CD4-positive, alpha-beta memory T cell (primary cell): ENCODE measurements at regions of chr1 and their contacts with region 1.

Region 1: DNA sequence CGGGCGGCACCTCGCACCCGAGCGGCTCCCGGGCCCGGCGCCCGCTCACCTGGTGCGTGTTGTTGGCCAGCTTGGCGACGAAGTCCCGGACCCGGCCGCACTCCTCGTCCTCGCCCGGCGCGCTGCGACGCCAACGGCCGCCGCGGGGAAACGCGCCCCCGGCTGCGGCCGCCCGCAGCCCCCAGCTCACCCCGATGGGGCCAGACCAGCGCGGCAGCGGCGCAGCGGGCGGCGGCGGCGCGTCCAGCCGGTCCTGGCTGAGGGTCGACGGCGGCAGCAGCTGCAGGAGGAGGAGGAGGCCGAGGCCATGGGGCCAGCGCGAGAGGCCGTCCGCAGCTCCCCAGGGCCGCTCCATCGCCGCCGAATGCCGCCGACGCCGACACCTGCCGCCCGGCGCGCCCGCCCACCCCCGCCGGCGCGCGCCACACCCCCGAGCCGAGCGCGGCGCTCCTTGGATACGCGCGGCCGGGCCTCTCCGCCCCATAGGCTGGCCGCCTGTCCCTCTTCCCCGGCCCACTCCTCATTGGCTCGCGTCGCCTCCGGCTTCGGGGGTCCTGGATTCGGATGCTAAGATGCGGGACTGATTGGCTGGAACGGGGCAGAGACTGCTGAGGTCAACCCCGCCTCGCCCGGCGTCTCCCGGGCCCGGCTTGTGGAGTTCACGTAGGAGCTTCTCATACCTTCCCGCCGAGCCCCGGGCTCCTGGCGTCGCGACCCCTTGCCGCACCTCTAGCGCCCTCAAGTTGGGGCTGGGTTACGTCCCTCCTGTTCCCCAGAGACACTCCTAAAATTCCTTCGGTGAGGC is at the start of gene SORT1:
- DNase-seq: peak; percentile 35 to 50 (median 40)
- H3K4me3 ChIP-seq: no peak within 1 kb of the TSS
- H3K4me3 Mint-ChIP-seq: peak within 1 kb of the TSS; percentile 70 to 86 (median 84)
- H3K27ac ChIP-seq: no peak within 1 kb of the TSS
- H3K27ac Mint-ChIP-seq: peak within 1 kb of the TSS in 2 of 7 donors; percentile 29 to 53
- H3K4me1 ChIP-seq: peaks cover 14% of the 10 kb centered on the region
- H3K4me1 Mint-ChIP-seq: peaks cover 5 to 15% (median 9%) of the 10 kb centered on the region in 4 donors
- H3K27me3 ChIP-seq: peaks cover 37% of the 10 kb centered on the region
- H3K27me3 Mint-ChIP-seq: peaks cover 30 to 31% of the 10 kb centered on the region in 2 donors
- total RNA-seq, gene SORT1: 0.69 to 0.93 TPM

Region 2: GRCh38 chr1:109201123-109201703 is 196.5 kb before region 1 on chr1:
- CTCF ChIA-PET with region 1: no interaction called
- POLR2A ChIA-PET with region 1: no interaction called
- intact Hi-C with region 1: loop called (anchors 1 kb)
- DNase-seq: peak in 2 of 5 donors; percentile 10 to 20
- H3K4me3 ChIP-seq: no peak overlapping the region
- H3K4me3 Mint-ChIP-seq: no peak overlapping the region
- H3K27ac ChIP-seq: no peak overlapping the region
- H3K27ac Mint-ChIP-seq: no peak overlapping the region
- H3K4me1 ChIP-seq: peaks cover 8% of the 10 kb centered on the region
- H3K4me1 Mint-ChIP-seq: peaks cover 5 to 13% (median 10%) of the 10 kb centered on the region in 4 donors
- H3K27me3 ChIP-seq: no peaks in the 10 kb centered on the region
- H3K27me3 Mint-ChIP-seq: no peaks in the 10 kb centered on the region

Region 3: GRCh38 chr1:109239580-109240095 is 158.1 kb before region 1 on chr1:
- CTCF ChIA-PET with region 1: no interaction called
- POLR2A ChIA-PET with region 1: interaction called, 13 read pairs
- intact Hi-C with region 1: no loop called
- DNase-seq: peak in 3 of 5 donors; percentile 27 to 36 (median 30)
- H3K4me3 ChIP-seq: no peak overlapping the region
- H3K4me3 Mint-ChIP-seq: no peak overlapping the region
- H3K27ac ChIP-seq: no peak overlapping the region
- H3K27ac Mint-ChIP-seq: peak overlapping the region; percentile 42 to 86 (median 63)
- H3K4me1 ChIP-seq: peaks cover 24% of the 10 kb centered on the region
- H3K4me1 Mint-ChIP-seq: peaks cover 16 to 32% (median 21%) of the 10 kb centered on the region in 4 donors
- H3K27me3 ChIP-seq: no peaks in the 10 kb centered on the region
- H3K27me3 Mint-ChIP-seq: peaks cover 4 to 6% of the 10 kb centered on the region in 2 donors

Region 4: GRCh38 chr1:109263597-109264398 is 133.9 kb before region 1 on chr1:
- CTCF ChIA-PET with region 1: interaction called, 41 read pairs
- POLR2A ChIA-PET with region 1: interaction called, 4 read pairs
- intact Hi-C with region 1: loop called (anchors 1 kb)
- DNase-seq: peak; percentile 59 to 70 (median 67)
- H3K4me3 ChIP-seq: no peak overlapping the region
- H3K4me3 Mint-ChIP-seq: no peak overlapping the region
- H3K27ac ChIP-seq: no peak overlapping the region
- H3K27ac Mint-ChIP-seq: peak overlapping the region in 1 of 7 donors; percentile 75
- H3K4me1 ChIP-seq: no peaks in the 10 kb centered on the region
- H3K4me1 Mint-ChIP-seq: peaks cover 0 to 4% (median under 1%) of the 10 kb centered on the region in 4 donors
- H3K27me3 ChIP-seq: no peaks in the 10 kb centered on the region
- H3K27me3 Mint-ChIP-seq: peaks cover 0 to 2% of the 10 kb centered on the region in 2 donors

Region 5: DNA sequence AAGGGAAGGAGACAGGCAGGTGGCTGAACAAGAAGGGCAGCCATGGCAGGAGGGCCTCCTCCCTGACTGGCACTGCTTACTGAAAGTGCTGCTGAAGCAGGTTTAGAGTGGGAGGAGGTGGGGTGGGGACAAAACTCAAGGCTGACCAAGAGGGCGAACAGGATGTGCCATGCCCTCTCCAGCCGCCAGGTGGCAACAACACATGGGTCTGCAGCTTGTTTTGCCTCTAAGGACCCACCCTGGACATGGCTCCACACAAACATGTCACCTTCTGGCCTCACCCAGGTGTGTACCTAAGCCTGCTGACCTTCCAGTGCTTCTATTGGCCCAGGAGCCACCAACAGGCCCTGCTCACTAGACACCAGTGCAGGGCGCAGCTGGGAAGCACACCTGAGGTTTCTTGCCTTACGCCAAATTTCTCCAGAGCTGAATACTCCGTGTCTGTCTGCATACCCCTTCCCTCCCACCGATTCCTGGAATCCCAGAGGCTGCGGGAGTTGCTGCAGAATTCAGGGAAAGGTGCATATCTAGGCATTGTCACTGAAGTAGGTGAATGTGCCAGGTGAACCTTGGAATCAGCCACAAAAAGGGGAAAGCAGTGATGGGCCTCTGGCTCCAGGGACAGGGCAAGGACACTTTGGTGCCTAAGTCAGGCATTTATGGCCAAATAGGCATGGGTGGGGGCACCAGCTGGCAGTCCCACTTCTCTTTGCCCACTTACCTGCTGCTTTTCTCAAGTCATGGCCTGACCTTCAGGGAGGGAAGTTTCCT is 120.1 kb before region 1 on chr1:
- CTCF ChIA-PET with region 1: interaction called, 193 read pairs
- POLR2A ChIA-PET with region 1: interaction called, 9 read pairs
- intact Hi-C with region 1: loop called (anchors 1 kb)
- DNase-seq: peak; percentile 33 to 57 (median 42)
- H3K4me3 ChIP-seq: no peak overlapping the region
- H3K4me3 Mint-ChIP-seq: no peak overlapping the region
- H3K27ac ChIP-seq: no peak overlapping the region
- H3K27ac Mint-ChIP-seq: peak overlapping the region in 1 of 7 donors; percentile 46
- H3K4me1 ChIP-seq: peaks cover 13% of the 10 kb centered on the region
- H3K4me1 Mint-ChIP-seq: peaks cover 3 to 13% (median 6%) of the 10 kb centered on the region in 4 donors
- H3K27me3 ChIP-seq: no peaks in the 10 kb centered on the region
- H3K27me3 Mint-ChIP-seq: no peaks in the 10 kb centered on the region

Region 6: DNA sequence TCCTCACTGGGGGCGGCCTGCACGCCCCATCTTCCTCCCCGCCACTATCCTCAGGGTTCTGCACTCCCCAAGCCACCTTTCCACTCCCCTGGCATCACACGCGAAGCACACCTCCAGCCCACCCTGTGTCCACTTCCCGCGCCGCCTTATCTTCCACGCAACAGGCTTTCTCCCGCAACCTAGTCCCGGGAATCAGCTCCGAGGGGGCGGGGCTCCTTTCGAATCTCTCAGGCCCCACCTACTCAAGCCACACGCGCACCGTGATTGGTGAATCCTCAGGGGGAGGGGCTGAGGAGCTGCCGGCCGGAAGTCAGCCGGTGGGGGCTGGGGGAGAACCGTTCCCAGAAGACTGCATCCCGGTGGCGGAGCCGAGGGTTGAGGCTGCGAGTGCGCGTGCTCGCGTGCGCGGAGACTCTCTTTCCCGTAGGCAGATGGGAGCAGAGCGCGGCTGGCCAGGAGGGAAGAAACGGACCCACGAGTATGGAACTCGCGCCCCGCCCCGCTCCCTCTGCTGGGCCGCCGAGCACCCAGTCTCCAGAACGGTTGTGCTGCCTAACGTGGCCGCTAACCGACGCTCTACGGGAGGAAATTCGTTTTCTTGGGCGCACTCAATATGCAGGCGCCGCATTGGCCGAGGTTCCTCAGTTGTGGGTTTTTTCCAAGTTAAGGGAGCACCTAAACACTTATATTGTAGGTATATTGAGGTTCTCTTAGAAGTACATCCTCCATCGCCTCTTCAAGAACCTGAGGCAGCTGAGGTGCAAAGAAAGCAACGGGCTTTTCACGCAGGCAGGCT is 114.6 kb before region 1 on chr1 and contains the start of gene PSRC1:
- CTCF ChIA-PET with region 1: interaction called, 193 read pairs
- POLR2A ChIA-PET with region 1: interaction called, 9 read pairs
- intact Hi-C with region 1: loop called (anchors 1 kb)
- DNase-seq: peak; percentile 87 to 91 (median 88)
- H3K4me3 ChIP-seq: peak within 1 kb of the TSS; percentile 74 to 91
- H3K4me3 Mint-ChIP-seq: peak within 1 kb of the TSS; percentile 91 to 100 (median 96)
- H3K27ac ChIP-seq: peak within 1 kb of the TSS; percentile 59
- H3K27ac Mint-ChIP-seq: peak within 1 kb of the TSS; percentile 82 to 93 (median 92)
- H3K4me1 ChIP-seq: peaks cover 23% of the 10 kb centered on the region
- H3K4me1 Mint-ChIP-seq: peaks cover 8 to 30% (median 16%) of the 10 kb centered on the region in 4 donors
- H3K27me3 ChIP-seq: no peaks in the 10 kb centered on the region
- H3K27me3 Mint-ChIP-seq: no peaks in the 10 kb centered on the region
- total RNA-seq, gene PSRC1: 0.17 to 0.28 TPM

Region 7: GRCh38 chr1:109341944-109342930 is 55.5 kb before region 1 on chr1:
- CTCF ChIA-PET with region 1: no interaction called
- POLR2A ChIA-PET with region 1: no interaction called
- intact Hi-C with region 1: no loop called
- DNase-seq: no peak
- H3K4me3 ChIP-seq: no peak overlapping the region
- H3K4me3 Mint-ChIP-seq: no peak overlapping the region
- H3K27ac ChIP-seq: no peak overlapping the region
- H3K27ac Mint-ChIP-seq: no peak overlapping the region
- H3K4me1 ChIP-seq: no peaks in the 10 kb centered on the region
- H3K4me1 Mint-ChIP-seq: no peaks in the 10 kb centered on the region
- H3K27me3 ChIP-seq: no peaks in the 10 kb centered on the region
- H3K27me3 Mint-ChIP-seq: peaks cover 5 to 12% of the 10 kb centered on the region in 2 donors